ENCODE measurements at regions of chr3 and their contacts with region 1.

Region 1: GRCh38 chr3:197912770-197913476 is 37.1 kb upstream of the RPL35A start:
- DNase-seq: no peak
- ATAC-seq: no peak
- H3K4me3 ChIP-seq: no peak overlapping the region
- H3K27ac ChIP-seq: no peak overlapping the region
- H3K4me1 ChIP-seq: no peaks in the 10 kb centered on the region
- H3K27me3 ChIP-seq: no peaks in the 10 kb centered on the region
- CTCF ChIP-seq: no peak
- POLR2A ChIP-seq: no peak
- RAD21 ChIP-seq: no peak

Region 2: GRCh38 chr3:197580253-197580691 is 332.7 kb before region 1 on chr3:
- CTCF ChIA-PET with region 1: no interaction called
- POLR2A ChIA-PET with region 1: no interaction called
- dilution Hi-C with region 1: no loop called
- in situ Hi-C with region 1: no loop called
- intact Hi-C with region 1: no loop called
- DNase-seq: no peak
- ATAC-seq: no peak
- H3K4me3 ChIP-seq: no peak overlapping the region
- H3K27ac ChIP-seq: no peak overlapping the region
- H3K4me1 ChIP-seq: no peaks in the 10 kb centered on the region
- H3K27me3 ChIP-seq: peaks cover 14% of the 10 kb centered on the region
- CTCF ChIP-seq: no peak
- POLR2A ChIP-seq: no peak
- RAD21 ChIP-seq: no peak

Region 3: DNA sequence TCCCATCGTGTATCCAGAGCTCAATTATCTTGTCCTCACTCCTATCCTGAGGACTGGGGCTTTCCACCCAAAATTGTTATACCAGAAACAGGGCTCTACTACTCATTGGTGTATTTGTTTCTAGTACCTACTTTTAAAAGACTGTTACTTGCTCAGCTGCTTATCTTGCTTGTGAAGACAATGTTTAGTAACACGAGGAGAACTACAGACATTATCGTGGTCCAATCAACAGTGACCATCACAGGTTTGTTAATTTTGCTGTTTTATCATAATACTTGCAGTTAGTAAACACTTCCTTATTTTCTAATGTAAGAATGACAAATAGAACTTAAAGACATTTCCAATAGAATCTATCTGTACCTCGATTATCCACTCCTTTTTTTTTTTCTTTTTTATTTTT is 108.4 kb before region 1 on chr3:
- CTCF ChIA-PET with region 1: interaction called, 10 read pairs
- POLR2A ChIA-PET with region 1: no interaction called
- dilution Hi-C with region 1: no loop called
- in situ Hi-C with region 1: no loop called
- intact Hi-C with region 1: no loop called
- DNase-seq: no peak
- ATAC-seq: no peak
- H3K4me3 ChIP-seq: no peak overlapping the region
- H3K27ac ChIP-seq: no peak overlapping the region
- H3K4me1 ChIP-seq: peaks cover 18% of the 10 kb centered on the region
- H3K27me3 ChIP-seq: no peaks in the 10 kb centered on the region
- CTCF ChIP-seq: no peak
- POLR2A ChIP-seq: no peak
- RAD21 ChIP-seq: no peak

Region 4: DNA sequence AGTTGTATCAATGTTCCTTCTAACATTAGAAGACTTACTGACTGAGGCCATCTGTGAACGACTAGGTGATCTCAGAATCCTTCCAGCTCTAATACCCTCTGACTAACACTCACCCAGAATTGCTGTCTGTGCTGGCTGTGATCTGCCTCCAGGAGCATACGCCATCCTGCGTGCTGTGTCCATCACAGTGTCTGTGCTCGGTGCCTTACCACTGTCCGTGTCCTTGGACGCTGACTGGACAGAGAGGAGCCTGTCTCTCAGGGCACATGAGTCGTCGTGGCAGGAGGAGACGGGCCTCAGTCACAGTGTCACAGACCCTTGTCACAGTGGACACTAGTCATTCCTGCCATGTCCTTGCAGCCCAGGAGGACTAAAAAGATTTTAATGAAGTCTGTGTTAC is 130.2 kb after region 1 on chr3:
- CTCF ChIA-PET with region 1: no interaction called
- POLR2A ChIA-PET with region 1: no interaction called
- dilution Hi-C with region 1: no loop called
- in situ Hi-C with region 1: no loop called
- intact Hi-C with region 1: no loop called
- DNase-seq: no peak
- ATAC-seq: no peak
- H3K4me3 ChIP-seq: no peak overlapping the region
- H3K27ac ChIP-seq: no peak overlapping the region
- H3K4me1 ChIP-seq: no peaks in the 10 kb centered on the region
- H3K27me3 ChIP-seq: peaks cover 2% of the 10 kb centered on the region; the same call in 1 of the 2 replicates
- CTCF ChIP-seq: no peak
- POLR2A ChIP-seq: no peak
- RAD21 ChIP-seq: no peak